ENCODE measurements at regions of chr9 and their contacts with region 1.

Region 1: GRCh38 chr9:8895861-8896224 is 1096.3 kb upstream of the DMAC1 start:
- DNase-seq: no peak

Region 2: GRCh38 chr9:8857926-8858595 is 37.8 kb before region 1 on chr9:
- intact Hi-C with region 1: loop called (anchors 2 kb)
- DNase-seq: peak; percentile 74 to 97 (median 83)

Region 3: DNA sequence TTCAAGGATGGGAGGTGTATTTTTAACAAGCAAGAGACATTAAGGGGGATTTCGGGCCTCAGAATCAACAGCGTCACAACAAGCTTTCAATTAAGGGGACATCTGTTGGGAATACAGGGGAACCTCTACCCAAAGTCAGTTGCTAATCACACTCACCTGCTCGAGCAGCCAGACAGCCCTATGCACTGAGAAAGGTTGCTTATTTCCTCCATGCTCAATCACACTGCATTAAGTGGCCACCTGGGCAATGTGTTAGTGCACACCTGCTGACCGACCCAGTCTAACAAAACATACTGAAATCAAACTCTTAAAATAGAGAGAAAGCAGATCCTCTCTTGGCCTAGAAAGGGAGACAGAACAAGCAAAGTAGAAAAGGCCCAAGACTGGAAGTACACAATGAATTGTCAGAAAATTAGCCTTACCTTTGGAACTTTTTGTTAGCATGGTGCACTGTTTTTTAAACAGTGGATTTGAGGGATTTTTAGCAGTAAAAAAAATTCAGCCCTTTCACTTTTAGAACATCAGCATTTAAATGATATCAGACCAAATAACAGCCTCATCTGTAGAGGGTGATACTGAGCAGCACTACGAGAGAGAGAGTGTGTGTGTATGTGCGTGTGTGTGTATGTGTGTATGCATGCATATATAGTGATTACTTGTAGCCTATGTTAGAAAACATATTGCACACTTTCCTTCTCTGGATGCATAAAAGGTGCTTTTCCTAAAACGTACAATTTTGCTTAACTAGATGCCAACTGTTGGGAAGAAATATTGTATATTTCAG is 22.3 kb after region 1 on chr9:
- intact Hi-C with region 1: no loop called
- DNase-seq: no peak

Region 4: GRCh38 chr9:9002826-9003583 is 107.2 kb after region 1 on chr9:
- intact Hi-C with region 1: loop called (anchors 5 kb)
- DNase-seq: peak in 4 of 10 donors; percentile 10 to 64 (median 32)